PC-3 (cell line): ENCODE measurements at regions of chr2 and their contacts with region 1.

Region 1: GRCh38 chr2:74482801-74483674 is at the starts of genes CCDC142 and TTC31:
- DNase-seq: peak; percentile 94
- ATAC-seq: peak; percentile 90
- H3K4me3 ChIP-seq: peak within 1 kb of the TSS; percentile 84
- H3K27ac ChIP-seq: peak within 1 kb of the TSS; percentile 46
- H3K4me1 ChIP-seq: peaks cover 24% of the 10 kb centered on the region
- H3K27me3 ChIP-seq: no peaks in the 10 kb centered on the region
- CTCF ChIP-seq: peak; percentile 95
- total RNA-seq, gene CCDC142: 14.7 and 21.1 TPM in 2 replicates
- total RNA-seq, gene TTC31: 21.1 and 21.4 TPM in 2 replicates

Region 2: GRCh38 chr2:74399785-74400184 is 83.3 kb before region 1 on chr2:
- CTCF ChIA-PET with region 1: no interaction called
- POLR2A ChIA-PET with region 1: interaction called, 45 read pairs
- intact Hi-C with region 1: no loop called
- DNase-seq: peak; percentile 66
- ATAC-seq: peak; percentile 57; the same call in 1 of the 2 replicates
- H3K4me3 ChIP-seq: no peak overlapping the region
- H3K27ac ChIP-seq: no peak overlapping the region
- H3K4me1 ChIP-seq: no peaks in the 10 kb centered on the region
- H3K27me3 ChIP-seq: no peaks in the 10 kb centered on the region
- CTCF ChIP-seq: peak; percentile 70

Region 3: GRCh38 chr2:74458132-74458925 is 24.7 kb before region 1 on chr2 and contains the start of gene WBP1:
- CTCF ChIA-PET with region 1: no interaction called
- POLR2A ChIA-PET with region 1: interaction called, 6 read pairs
- intact Hi-C with region 1: loop called (anchors 1 kb)
- DNase-seq: peak; percentile 99
- ATAC-seq: peak; percentile 80
- H3K4me3 ChIP-seq: peak within 1 kb of the TSS; percentile 100
- H3K27ac ChIP-seq: peak within 1 kb of the TSS; percentile 93
- H3K4me1 ChIP-seq: peaks cover 27% of the 10 kb centered on the region
- H3K27me3 ChIP-seq: no peaks in the 10 kb centered on the region
- CTCF ChIP-seq: no peak
- total RNA-seq, gene WBP1: 57.5 and 64.4 TPM in 2 replicates

Region 4: DNA sequence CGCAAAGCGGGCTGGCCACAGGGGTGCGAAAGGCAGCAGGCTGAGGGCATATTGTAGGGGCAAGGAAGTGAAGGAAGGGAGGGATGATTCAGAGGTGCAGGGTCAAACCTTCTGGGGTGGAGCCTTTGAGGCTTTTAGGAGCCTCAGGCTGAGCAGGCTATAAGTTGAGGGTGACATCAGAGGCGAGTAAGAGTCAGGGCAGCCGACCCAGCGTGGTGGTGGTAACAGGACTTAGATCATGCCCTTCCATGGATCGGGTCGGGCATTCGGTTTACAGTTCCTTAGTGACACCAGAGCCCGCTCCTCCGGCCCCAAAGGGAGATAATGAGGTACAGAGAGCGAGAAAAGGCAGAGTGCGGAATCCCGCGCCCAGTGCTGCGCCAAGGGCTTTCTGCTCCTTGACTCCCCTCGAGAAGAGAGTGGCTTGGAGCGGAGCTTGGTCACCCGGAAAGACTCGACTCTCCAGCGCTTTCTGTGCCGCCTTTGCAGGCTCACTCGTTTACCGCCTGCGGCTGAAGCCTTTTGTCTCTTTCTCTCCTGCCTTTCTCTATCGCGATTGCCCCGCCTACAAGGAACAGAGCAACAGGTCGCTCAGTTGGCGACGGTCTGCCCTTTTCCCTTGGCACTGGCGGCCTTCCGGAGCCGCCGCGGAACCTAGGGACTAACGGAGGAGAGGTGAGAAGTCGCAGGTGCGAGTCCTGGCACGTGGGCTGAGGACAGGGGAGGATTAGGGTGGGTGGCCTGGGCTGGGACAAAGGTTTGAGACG is 15.6 kb after region 1 on chr2:
- CTCF ChIA-PET with region 1: no interaction called
- POLR2A ChIA-PET with region 1: no interaction called
- intact Hi-C with region 1: loop called (anchors 1 kb)
- DNase-seq: peak; percentile 58
- ATAC-seq: peak; percentile 69
- H3K4me3 ChIP-seq: peak overlapping the region; percentile 67
- H3K27ac ChIP-seq: no peak overlapping the region
- H3K4me1 ChIP-seq: peaks cover 19% of the 10 kb centered on the region
- H3K27me3 ChIP-seq: no peaks in the 10 kb centered on the region
- CTCF ChIP-seq: no peak

Region 5: GRCh38 chr2:74507145-74507925 is 24.3 kb after region 1 on chr2 and contains the start of gene PCGF1:
- CTCF ChIA-PET with region 1: no interaction called
- POLR2A ChIA-PET with region 1: no interaction called
- intact Hi-C with region 1: loop called (anchors 1 kb)
- DNase-seq: peak; percentile 99
- ATAC-seq: peak; percentile 93
- H3K4me3 ChIP-seq: peak within 1 kb of the TSS; percentile 95
- H3K27ac ChIP-seq: peak within 1 kb of the TSS; percentile 94
- H3K4me1 ChIP-seq: peaks cover 18% of the 10 kb centered on the region
- H3K27me3 ChIP-seq: no peaks in the 10 kb centered on the region
- CTCF ChIP-seq: 0 out of 2 replicates have a peak, but pooled peaks have one; percentile 17
- total RNA-seq, gene PCGF1: 31.2 and 35.7 TPM in 2 replicates

Region 6: DNA sequence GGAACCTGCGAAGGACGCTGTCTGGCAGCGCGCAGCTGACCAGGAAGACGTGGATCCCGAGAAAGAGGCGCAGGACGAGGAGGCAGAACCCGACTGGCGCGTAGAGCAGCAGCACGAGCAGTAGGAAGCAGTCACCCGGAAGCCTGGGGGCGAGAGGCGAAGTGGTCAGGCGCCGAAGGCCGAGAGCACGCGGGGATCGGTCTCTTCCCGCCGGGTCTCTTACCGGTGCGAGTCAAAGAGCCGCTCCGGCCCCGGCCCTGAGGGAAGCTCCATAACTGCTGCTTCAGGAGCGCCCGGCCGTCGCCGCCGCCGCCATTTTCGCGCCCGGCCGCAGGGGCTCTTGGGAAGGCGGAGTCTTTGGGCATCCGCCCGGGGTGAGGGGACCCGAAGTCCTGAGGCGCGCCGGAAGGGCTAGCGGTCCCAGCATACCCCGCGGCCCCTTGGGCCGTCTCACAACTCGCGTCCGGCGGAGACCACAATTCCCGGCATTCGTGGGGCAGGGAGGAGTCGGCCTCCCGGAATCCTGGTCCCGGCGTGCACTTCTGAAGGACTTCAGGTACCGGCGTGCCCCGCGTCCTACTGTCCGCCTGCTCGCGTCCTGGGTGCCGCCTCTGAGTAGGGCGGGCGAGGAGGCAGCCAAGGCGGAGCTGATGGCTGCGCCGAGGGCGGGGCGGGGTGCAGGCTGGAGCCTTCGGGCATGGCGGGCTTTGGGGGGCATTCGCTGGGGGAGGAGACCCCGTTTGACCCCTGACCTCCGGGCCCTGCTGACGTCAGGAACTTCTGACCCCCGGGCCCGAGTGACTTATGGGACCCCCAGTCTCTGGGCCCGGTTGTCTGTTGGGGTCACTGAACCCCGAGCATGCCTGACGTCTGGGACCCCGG is 46.6 kb after region 1 on chr2 and contains the starts of genes AUP1 and HTRA2:
- CTCF ChIA-PET with region 1: interaction called, 5 read pairs
- POLR2A ChIA-PET with region 1: no interaction called
- intact Hi-C with region 1: loop called (anchors 1 kb)
- DNase-seq: peak; percentile 99
- ATAC-seq: peak; percentile 93
- H3K4me3 ChIP-seq: peak within 1 kb of the TSS; percentile 93
- H3K27ac ChIP-seq: peak within 1 kb of the TSS; percentile 63
- H3K4me1 ChIP-seq: peaks cover 20% of the 10 kb centered on the region
- H3K27me3 ChIP-seq: no peaks in the 10 kb centered on the region
- CTCF ChIP-seq: no peak
- total RNA-seq, gene AUP1: 218 and 233 TPM in 2 replicates
- total RNA-seq, gene HTRA2: 71.8 and 77.5 TPM in 2 replicates

Region 7: DNA sequence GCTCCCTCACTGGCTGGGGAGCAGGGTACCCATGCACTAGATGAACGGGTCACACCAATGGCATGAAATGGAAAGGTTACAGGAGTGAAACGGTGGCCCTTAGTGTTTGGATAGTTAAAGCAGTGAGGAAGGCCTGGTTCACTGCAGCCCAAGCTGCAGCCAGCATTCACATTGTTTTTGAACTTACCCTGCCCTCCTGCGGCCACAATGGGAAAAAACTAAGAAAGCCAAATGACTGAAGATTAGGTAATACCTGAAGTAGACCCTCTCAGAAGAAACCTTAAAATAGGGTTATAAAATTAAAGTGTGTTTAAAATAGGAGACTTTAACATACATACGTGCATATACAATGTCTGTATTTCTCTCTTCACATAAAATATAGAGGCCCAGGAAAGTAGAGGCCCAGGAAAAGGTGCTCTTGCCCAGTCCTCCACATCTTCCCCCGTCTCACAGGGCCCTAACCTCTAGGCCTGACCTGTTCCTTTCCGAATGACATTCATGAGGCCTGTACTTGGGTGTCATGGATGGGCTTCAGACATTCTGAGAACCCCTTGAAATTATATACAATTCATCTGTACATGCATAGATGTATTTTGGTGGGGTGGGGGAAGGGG is 104.7 kb after region 1 on chr2:
- CTCF ChIA-PET with region 1: no interaction called
- POLR2A ChIA-PET with region 1: no interaction called
- intact Hi-C with region 1: loop called (anchors 1 kb)
- DNase-seq: peak; percentile 83
- ATAC-seq: peak; percentile 90
- H3K4me3 ChIP-seq: no peak overlapping the region
- H3K27ac ChIP-seq: no peak overlapping the region
- H3K4me1 ChIP-seq: peaks cover 19% of the 10 kb centered on the region
- H3K27me3 ChIP-seq: no peaks in the 10 kb centered on the region
- CTCF ChIP-seq: peak; percentile 84